ENCODE measurements at regions of chr12 and their contacts with region 1.

Region 1: GRCh38 chr12:124767066-124767821 is 96.4 kb downstream of the SCARB1 start:
- DNase-seq: peak; percentile 89
- ATAC-seq: peak; percentile 90
- H3K4me3 ChIP-seq: no peak overlapping the region
- H3K27ac ChIP-seq: peak overlapping the region; percentile 72
- H3K4me1 ChIP-seq: peaks cover 28% of the 10 kb centered on the region
- H3K27me3 ChIP-seq: no peaks in the 10 kb centered on the region
- CTCF ChIP-seq: peak; percentile 100

Region 2: DNA sequence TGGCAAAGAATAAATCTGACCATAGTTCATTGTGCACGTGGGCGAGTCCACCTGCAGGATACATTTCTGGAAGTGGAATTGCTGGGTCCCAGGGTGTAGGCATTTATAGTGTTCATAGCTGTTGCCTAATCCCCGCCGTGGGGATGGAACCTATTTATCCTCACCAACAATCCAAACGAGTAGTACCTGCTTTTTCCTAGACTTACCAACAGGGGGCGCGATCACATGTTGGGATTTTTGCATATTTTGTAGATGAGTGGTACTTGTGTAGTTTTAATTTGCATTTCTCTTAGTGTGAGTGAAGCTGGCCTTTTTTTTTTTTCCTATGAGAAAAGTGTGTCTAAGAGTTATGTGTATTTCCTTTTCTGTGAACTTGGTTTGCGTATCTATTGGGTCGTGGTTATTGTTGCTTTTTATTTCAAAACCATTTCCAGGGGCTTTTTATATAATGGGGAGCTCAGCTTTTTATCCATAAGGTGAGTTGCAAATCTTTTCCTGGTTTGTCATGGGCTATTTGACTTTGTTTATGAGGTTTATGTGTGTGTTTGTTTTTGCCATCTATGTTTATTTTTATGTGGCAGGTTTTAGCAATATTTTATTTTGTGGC is 861.8 kb before region 1 on chr12:
- intact Hi-C with region 1: loop called (anchors 10 kb)
- DNase-seq: no peak
- ATAC-seq: peak; percentile 84
- H3K4me3 ChIP-seq: no peak overlapping the region
- H3K27ac ChIP-seq: no peak overlapping the region
- H3K4me1 ChIP-seq: no peaks in the 10 kb centered on the region
- H3K27me3 ChIP-seq: no peaks in the 10 kb centered on the region
- CTCF ChIP-seq: peak; percentile 86

Region 3: GRCh38 chr12:124036674-124037109 is 730.6 kb before region 1 on chr12:
- intact Hi-C with region 1: loop called (anchors 5 kb)
- DNase-seq: no peak
- ATAC-seq: peak; percentile 72
- H3K4me3 ChIP-seq: no peak overlapping the region
- H3K27ac ChIP-seq: no peak overlapping the region
- H3K4me1 ChIP-seq: no peaks in the 10 kb centered on the region
- H3K27me3 ChIP-seq: no peaks in the 10 kb centered on the region
- CTCF ChIP-seq: peak; percentile 93

Region 4: DNA sequence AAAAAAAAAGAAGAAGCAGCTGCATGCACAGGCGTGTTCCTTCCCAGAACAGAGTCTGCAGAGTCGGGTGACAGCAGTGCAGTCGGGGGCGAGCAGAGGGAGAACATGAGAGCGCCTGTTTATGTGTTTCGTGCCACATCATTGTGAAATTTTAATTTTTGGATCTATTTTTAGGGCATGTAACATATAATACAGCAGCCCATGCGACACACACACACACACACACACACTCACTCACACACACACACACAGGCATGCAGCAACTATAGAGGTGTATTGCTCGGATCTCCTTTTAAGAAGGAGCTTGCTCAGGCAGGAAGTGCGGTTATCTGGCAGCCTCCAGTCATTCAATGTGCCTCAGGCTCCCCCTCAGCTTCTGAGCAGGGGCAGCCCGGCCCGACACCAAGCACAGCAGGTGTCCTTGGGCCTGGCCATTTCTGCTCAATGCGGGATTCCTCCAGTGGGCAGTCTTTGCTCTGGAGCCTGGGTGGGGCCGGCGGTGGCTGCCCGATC is 722.4 kb before region 1 on chr12:
- intact Hi-C with region 1: loop called (anchors 5 kb)
- DNase-seq: no peak
- ATAC-seq: peak; percentile 30
- H3K4me3 ChIP-seq: no peak overlapping the region
- H3K27ac ChIP-seq: no peak overlapping the region
- H3K4me1 ChIP-seq: no peaks in the 10 kb centered on the region
- H3K27me3 ChIP-seq: no peaks in the 10 kb centered on the region
- CTCF ChIP-seq: no peak

Region 5: GRCh38 chr12:124567661-124568373 is 199.4 kb before region 1 on chr12:
- intact Hi-C with region 1: loop called (anchors 10 kb)
- DNase-seq: peak; percentile 98
- ATAC-seq: peak; percentile 88
- H3K4me3 ChIP-seq: peak overlapping the region; percentile 45
- H3K27ac ChIP-seq: peak overlapping the region; percentile 79
- H3K4me1 ChIP-seq: peaks cover 47% of the 10 kb centered on the region
- H3K27me3 ChIP-seq: no peaks in the 10 kb centered on the region
- CTCF ChIP-seq: no peak

Region 6: DNA sequence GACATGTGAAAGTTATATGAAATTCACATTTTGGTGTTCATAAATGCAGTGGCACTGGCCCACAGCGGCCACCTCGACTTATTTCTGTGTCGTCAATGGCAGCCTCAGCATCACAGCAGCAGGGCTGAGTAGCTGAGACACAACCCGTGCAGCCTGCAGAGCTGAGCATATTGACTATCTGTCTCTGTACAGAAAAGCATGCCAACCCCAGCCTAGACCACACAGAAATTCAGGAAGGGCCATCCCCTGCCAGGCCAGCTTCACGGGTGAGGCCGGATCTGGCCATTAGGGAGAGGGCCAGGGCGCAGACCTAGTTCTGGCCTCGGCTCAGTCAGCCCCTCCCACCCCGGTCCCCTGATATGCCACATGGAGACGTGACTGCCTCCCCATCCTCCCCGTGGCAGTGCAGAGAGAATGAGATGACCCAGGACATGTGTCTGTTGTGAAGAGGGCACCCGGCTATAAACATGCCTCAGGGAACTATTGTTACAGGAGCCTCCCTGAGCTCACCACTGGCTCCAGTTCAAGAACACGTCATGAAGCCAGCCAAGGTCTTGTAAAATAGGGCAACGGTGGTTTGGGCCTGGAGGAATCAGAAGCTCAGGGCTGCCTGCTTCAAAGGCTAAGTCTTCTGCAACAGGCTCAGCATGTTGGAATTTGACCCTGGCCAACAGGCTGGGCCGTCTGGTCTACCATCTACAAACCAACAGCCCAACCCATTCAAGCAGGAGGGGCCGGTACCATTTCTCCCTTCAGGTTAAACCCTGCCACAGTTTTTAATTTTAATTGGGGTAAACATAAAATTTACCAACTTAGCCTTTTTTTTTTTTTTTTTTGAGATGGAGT is 70.9 kb after region 1 on chr12:
- intact Hi-C with region 1: no loop called
- DNase-seq: no peak
- ATAC-seq: peak; percentile 56
- H3K4me3 ChIP-seq: no peak overlapping the region
- H3K27ac ChIP-seq: no peak overlapping the region
- H3K4me1 ChIP-seq: no peaks in the 10 kb centered on the region
- H3K27me3 ChIP-seq: no peaks in the 10 kb centered on the region
- CTCF ChIP-seq: no peak